Right ventricle myocardium superior (tissue), 1 donor: ENCODE measurements at regions of chr13 and their contacts with region 1.

Region 1: DNA sequence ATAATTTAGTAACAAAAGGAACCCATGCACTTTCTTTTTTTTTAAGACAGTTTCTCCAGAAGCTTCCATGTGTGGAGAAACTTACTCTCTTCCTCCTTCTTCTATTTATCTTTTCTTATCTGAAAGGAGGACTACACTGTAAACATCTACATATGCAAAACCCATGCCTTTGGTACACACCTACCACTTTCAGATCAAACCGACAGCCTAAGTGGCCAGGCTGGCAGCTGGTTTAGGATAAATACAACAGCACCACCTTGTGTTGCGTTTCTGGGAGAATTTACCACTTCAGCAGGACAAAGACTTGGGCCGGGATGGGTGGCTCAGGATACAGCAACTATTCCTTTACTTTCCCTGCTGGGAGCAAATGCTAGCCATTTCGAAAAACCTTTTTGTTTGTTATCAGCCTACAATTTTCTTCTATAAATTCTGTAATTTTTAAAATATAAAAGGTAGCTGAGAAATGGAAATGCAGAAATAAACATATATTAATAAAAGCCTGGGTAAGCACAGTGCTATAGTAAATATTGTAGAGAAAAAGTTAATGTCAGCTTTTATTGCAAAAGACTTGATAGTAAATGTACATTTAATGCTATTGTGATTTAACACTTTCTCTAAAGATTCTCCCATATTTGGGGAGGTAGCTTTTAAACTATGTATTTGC is 94.0 kb upstream of the RFC3 start:
- DNase-seq: peak; percentile 68
- ATAC-seq: peak; percentile 87

Region 2: GRCh38 chr13:33349986-33350826 is 373.7 kb before region 1 on chr13:
- intact Hi-C with region 1: loop called (anchors 10 kb)
- DNase-seq: peak; percentile 76
- ATAC-seq: peak; percentile 84

Region 3: DNA sequence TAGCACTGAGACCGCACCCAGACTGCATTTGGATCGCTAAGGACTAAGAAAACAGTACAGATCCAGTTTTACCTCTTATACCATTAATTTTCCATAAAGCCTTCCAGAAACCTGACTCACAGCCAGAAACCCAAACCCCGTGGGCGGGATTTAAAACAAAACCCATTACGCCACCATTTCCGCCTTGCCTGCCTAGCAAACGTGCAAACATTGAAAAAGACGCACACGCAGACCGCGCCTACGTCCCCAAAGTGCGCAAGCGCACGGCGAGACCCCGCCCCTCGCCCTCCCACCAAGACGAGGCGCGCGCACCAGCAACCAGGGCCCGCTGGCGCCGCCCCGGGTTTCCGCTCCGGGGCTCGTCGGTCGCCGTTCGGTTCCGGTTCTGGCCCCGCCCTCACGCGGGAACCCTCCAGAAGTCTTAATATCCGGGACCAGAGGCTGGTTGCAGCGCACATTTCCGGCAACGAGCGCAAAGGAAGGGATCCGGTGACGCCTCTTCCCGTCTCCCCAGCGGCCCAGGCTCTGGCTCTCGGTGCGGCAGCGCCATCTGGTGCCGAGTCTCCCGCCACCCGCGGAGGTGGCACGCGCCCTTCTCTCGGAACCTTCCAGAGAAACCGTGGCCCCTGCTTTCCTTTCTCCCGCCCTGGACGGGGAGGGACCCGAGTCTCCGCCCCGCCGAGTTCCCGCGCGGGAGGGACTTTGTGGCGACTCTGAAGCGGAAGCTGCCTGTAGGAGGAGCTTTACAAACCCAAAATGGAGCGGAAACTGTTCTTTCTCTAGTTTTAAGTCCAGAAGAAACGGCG is 181.4 kb before region 1 on chr13:
- intact Hi-C with region 1: loop called (anchors 5 kb)
- DNase-seq: peak; percentile 99
- ATAC-seq: peak; percentile 95

Region 4: GRCh38 chr13:33610471-33611015 is 113.4 kb before region 1 on chr13:
- intact Hi-C with region 1: loop called (anchors 5 kb)
- DNase-seq: peak; percentile 85
- ATAC-seq: peak; percentile 86